PC-9 (cell line): ENCODE measurements at regions of chr17 and their contacts with region 1.

Region 1: GRCh38 chr17:41648411-41649195 is 24.2 kb upstream of the KRT17 start:
- DNase-seq: peak; percentile 66 to 85
- H3K4me3 ChIP-seq: peak overlapping the region; percentile 46
- H3K27ac ChIP-seq: peak overlapping the region; percentile 68
- H3K4me1 ChIP-seq: peaks cover 58% of the 10 kb centered on the region
- H3K27me3 ChIP-seq: no peaks in the 10 kb centered on the region
- CTCF ChIP-seq: peak; percentile 93

Region 2: GRCh38 chr17:40516581-40517285 is 1131.9 kb before region 1 on chr17:
- CTCF ChIA-PET with region 1: no interaction called
- POLR2A ChIA-PET with region 1: no interaction called
- intact Hi-C with region 1: loop called (anchors 5 kb)
- DNase-seq: peak; percentile 65 to 94
- H3K4me3 ChIP-seq: no peak overlapping the region
- H3K27ac ChIP-seq: peak overlapping the region; percentile 69
- H3K4me1 ChIP-seq: peaks cover 99% of the 10 kb centered on the region
- H3K27me3 ChIP-seq: no peaks in the 10 kb centered on the region
- CTCF ChIP-seq: no peak

Region 3: DNA sequence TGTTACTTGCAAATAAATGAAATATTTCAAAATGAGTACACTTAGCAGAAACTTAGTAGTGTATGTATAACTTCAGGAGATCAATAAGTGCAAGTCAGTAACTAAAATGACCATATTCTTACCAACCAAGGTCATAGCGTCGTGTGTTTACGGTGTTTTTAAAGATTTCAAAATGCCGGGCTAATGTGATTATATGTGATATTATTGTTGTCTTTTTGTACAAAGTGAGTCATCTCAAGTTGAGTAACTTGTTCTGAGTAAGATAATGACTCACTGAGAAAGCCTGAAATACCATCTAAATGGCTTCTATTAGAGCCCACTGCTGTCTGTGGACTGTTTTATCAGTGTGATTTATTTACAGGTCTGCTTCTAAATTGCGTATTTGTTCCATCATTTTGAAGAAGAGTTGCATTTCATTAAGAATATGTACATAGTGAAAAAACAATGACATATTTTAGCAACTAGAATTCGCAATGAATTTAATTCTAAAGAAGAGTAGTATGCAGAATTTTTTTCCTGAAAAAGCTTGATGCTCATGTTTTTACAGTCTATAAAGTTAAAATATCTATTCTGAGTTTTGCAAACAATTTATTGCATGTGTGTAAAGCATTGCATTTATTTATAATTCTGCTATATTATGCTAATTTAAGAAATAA is 794.3 kb before region 1 on chr17:
- CTCF ChIA-PET with region 1: no interaction called
- POLR2A ChIA-PET with region 1: interaction called, 8 read pairs
- intact Hi-C with region 1: loop called (anchors 5 kb)
- DNase-seq: peak in 1 of 2 experiments; percentile 90
- H3K4me3 ChIP-seq: no peak overlapping the region
- H3K27ac ChIP-seq: peak overlapping the region; percentile 94
- H3K4me1 ChIP-seq: peaks cover 72% of the 10 kb centered on the region
- H3K27me3 ChIP-seq: no peaks in the 10 kb centered on the region
- CTCF ChIP-seq: no peak

Region 4: DNA sequence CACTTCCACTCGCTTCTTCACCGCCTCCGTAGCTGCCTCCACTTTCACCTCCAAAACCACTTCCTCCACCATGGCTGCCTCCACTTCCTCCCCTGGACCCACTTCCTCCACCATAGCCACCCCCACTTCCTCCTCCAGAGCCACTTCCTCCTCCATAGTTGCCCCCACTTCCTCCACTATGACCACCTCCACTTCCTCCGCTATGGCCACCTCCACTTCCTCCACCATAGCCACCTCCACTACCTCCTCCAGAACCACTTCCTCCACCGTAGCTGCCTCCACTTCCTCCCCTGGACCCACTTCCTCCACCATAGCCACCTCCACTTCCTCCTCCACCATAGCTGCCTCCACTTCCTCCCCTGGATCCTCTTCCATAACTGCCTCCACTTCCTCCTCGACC is 81.3 kb before region 1 on chr17:
- CTCF ChIA-PET with region 1: interaction called, 13 read pairs
- POLR2A ChIA-PET with region 1: no interaction called
- intact Hi-C with region 1: no loop called
- DNase-seq: no peak
- H3K4me3 ChIP-seq: no peak overlapping the region
- H3K27ac ChIP-seq: no peak overlapping the region
- H3K4me1 ChIP-seq: no peaks in the 10 kb centered on the region
- H3K27me3 ChIP-seq: no peaks in the 10 kb centered on the region
- CTCF ChIP-seq: no peak

Region 5: GRCh38 chr17:41624208-41625101 is 24.1 kb before region 1 on chr17 and contains the start of gene KRT17:
- CTCF ChIA-PET with region 1: interaction called, 3 read pairs
- POLR2A ChIA-PET with region 1: no interaction called
- intact Hi-C with region 1: loop called (anchors 2 kb)
- DNase-seq: peak in 1 of 2 experiments; percentile 76
- H3K4me3 ChIP-seq: no peak within 1 kb of the TSS
- H3K27ac ChIP-seq: no peak within 1 kb of the TSS
- H3K4me1 ChIP-seq: peaks cover 8% of the 10 kb centered on the region
- H3K27me3 ChIP-seq: no peaks in the 10 kb centered on the region
- CTCF ChIP-seq: no peak
- total RNA-seq, gene KRT17: 29.0 and 80.8 TPM in 2 replicates

Region 6: GRCh38 chr17:41734139-41734948 is 85.7 kb after region 1 on chr17 and contains the start of gene HAP1:
- CTCF ChIA-PET with region 1: no interaction called
- POLR2A ChIA-PET with region 1: no interaction called
- intact Hi-C with region 1: no loop called
- DNase-seq: peak in 1 of 2 experiments; percentile 48
- H3K4me3 ChIP-seq: peak within 1 kb of the TSS; percentile 69
- H3K27ac ChIP-seq: no peak within 1 kb of the TSS
- H3K4me1 ChIP-seq: peaks cover 30% of the 10 kb centered on the region
- H3K27me3 ChIP-seq: peaks cover 34% of the 10 kb centered on the region
- CTCF ChIP-seq: no peak
- total RNA-seq, gene HAP1: 1.1 and 2.2 TPM in 2 replicates

Region 7: GRCh38 chr17:41944943-41945342 is 296.3 kb after region 1 on chr17:
- CTCF ChIA-PET with region 1: no interaction called
- POLR2A ChIA-PET with region 1: no interaction called
- intact Hi-C with region 1: no loop called
- DNase-seq: no peak
- H3K4me3 ChIP-seq: no peak overlapping the region
- H3K27ac ChIP-seq: no peak overlapping the region
- H3K4me1 ChIP-seq: no peaks in the 10 kb centered on the region
- H3K27me3 ChIP-seq: no peaks in the 10 kb centered on the region
- CTCF ChIP-seq: no peak